CD4-positive, alpha-beta memory T cell (primary cell): ENCODE measurements at regions of chr14 and their contacts with region 1.

Region 1: GRCh38 chr14:24241829-24242443 is 487 bp downstream of the TINF2 start:
- DNase-seq: peak; percentile 96 to 98 (median 97)
- H3K4me3 ChIP-seq: peak overlapping the region; percentile 79 to 81
- H3K4me3 Mint-ChIP-seq: peak overlapping the region; percentile 87 to 99 (median 94)
- H3K27ac ChIP-seq: peak overlapping the region; percentile 96
- H3K27ac Mint-ChIP-seq: peak overlapping the region; percentile 99 to 100 (median 99)
- H3K4me1 ChIP-seq: peaks cover 55% of the 10 kb centered on the region
- H3K4me1 Mint-ChIP-seq: peaks cover 35 to 77% (median 57%) of the 10 kb centered on the region in 4 donors
- H3K27me3 ChIP-seq: no peaks in the 10 kb centered on the region
- H3K27me3 Mint-ChIP-seq: no peaks in the 10 kb centered on the region

Region 2: GRCh38 chr14:23306410-23307145 is 935.4 kb before region 1 on chr14 and contains the start of gene BCL2L2:
- CTCF ChIA-PET with region 1: no interaction called
- POLR2A ChIA-PET with region 1: no interaction called
- intact Hi-C with region 1: no loop called
- DNase-seq: no peak
- H3K4me3 ChIP-seq: no peak within 1 kb of the TSS
- H3K4me3 Mint-ChIP-seq: no peak within 1 kb of the TSS
- H3K27ac ChIP-seq: no peak within 1 kb of the TSS
- H3K27ac Mint-ChIP-seq: peak within 1 kb of the TSS in 1 of 7 donors; percentile 54
- H3K4me1 ChIP-seq: no peaks in the 10 kb centered on the region
- H3K4me1 Mint-ChIP-seq: peaks cover 4 to 10% (median 6%) of the 10 kb centered on the region in 4 donors
- H3K27me3 ChIP-seq: no peaks in the 10 kb centered on the region
- H3K27me3 Mint-ChIP-seq: peaks cover 17 to 33% of the 10 kb centered on the region in 2 donors
- total RNA-seq, gene BCL2L2: 2.0 to 3.6 TPM

Region 3: GRCh38 chr14:24108336-24108874 is 133.5 kb before region 1 on chr14:
- CTCF ChIA-PET with region 1: interaction called, 8 read pairs
- POLR2A ChIA-PET with region 1: interaction called, 32 read pairs
- intact Hi-C with region 1: no loop called
- DNase-seq: no peak
- H3K4me3 ChIP-seq: no peak overlapping the region
- H3K4me3 Mint-ChIP-seq: peak overlapping the region in 4 of 8 donors; percentile 30 to 64 (median 44)
- H3K27ac ChIP-seq: peak overlapping the region; percentile 45
- H3K27ac Mint-ChIP-seq: peak overlapping the region; percentile 82 to 96 (median 95)
- H3K4me1 ChIP-seq: peaks cover 18% of the 10 kb centered on the region
- H3K4me1 Mint-ChIP-seq: peaks cover 6 to 15% (median 12%) of the 10 kb centered on the region in 4 donors
- H3K27me3 ChIP-seq: no peaks in the 10 kb centered on the region
- H3K27me3 Mint-ChIP-seq: no peaks in the 10 kb centered on the region

Region 4: GRCh38 chr14:24160850-24161804 is 80.8 kb before region 1 on chr14 and contains the start of gene IRF9:
- CTCF ChIA-PET with region 1: interaction called, 16 read pairs
- POLR2A ChIA-PET with region 1: interaction called, 18 read pairs
- intact Hi-C with region 1: no loop called
- DNase-seq: peak; percentile 94 to 97 (median 95)
- H3K4me3 ChIP-seq: peak within 1 kb of the TSS; percentile 73 to 97
- H3K4me3 Mint-ChIP-seq: peak within 1 kb of the TSS; percentile 96 to 100 (median 99)
- H3K27ac ChIP-seq: peak within 1 kb of the TSS; percentile 90
- H3K27ac Mint-ChIP-seq: peak within 1 kb of the TSS; percentile 97 to 100 (median 99)
- H3K4me1 ChIP-seq: peaks cover 50% of the 10 kb centered on the region
- H3K4me1 Mint-ChIP-seq: peaks cover 29 to 60% (median 48%) of the 10 kb centered on the region in 4 donors
- H3K27me3 ChIP-seq: no peaks in the 10 kb centered on the region
- H3K27me3 Mint-ChIP-seq: no peaks in the 10 kb centered on the region
- total RNA-seq, gene IRF9: 154 to 157 TPM

Region 5: GRCh38 chr14:24259252-24259995 is 17.5 kb after region 1 on chr14:
- CTCF ChIA-PET with region 1: interaction called, 10 read pairs
- POLR2A ChIA-PET with region 1: interaction called, 5 read pairs
- intact Hi-C with region 1: no loop called
- DNase-seq: no peak
- H3K4me3 ChIP-seq: no peak overlapping the region
- H3K4me3 Mint-ChIP-seq: no peak overlapping the region
- H3K27ac ChIP-seq: no peak overlapping the region
- H3K27ac Mint-ChIP-seq: peak overlapping the region in 1 of 7 donors; percentile 52
- H3K4me1 ChIP-seq: no peaks in the 10 kb centered on the region
- H3K4me1 Mint-ChIP-seq: no peaks in the 10 kb centered on the region
- H3K27me3 ChIP-seq: no peaks in the 10 kb centered on the region
- H3K27me3 Mint-ChIP-seq: no peaks in the 10 kb centered on the region

Region 6: DNA sequence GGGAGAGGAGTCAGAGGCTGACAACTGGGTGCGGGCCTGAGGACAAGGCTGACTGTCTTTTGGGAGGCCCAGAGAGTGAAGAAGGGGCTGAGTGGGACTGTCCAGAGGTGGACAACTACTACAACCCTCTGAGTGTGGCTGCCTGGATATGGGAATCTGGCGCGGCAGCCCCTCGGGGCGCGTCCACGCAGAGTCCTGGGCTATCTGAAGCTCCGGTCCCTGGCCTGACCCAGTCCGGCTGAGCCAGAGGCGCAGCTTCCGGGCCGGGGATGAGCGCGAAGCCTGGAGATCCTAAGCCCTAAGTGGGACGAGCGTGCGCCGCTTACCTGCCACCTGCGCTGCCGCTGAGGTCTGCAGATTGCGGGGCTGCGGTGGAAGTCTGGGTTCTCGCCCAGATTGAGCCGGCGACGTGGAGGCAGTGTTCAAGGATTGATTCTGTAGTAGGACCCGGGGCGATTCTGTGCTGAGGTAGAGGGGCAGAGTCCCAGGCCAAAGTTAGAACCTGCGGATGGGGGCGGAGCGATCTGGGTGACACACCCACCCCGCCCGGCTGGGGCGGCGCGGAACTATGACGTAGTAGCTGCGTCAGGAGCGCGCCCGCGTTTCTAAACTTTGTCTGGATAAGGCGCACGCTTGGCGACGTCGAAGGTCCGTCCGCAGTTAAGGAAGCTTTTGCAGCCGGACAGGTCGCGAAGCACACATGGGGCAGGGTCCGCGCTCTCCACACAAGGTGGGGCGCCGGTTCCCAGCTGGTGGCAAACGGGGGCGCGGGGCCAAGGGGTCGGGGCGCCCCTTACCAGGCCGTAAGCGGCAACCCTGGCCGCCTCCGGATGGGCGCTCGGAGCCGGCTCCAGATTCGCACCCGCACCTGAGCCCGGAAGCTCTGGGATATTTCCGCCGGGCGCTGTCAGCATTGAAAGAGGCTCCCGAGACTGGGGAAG is 57.6 kb after region 1 on chr14 and contains the starts of genes DHRS1 and NOP9:
- CTCF ChIA-PET with region 1: interaction called, 556 read pairs
- POLR2A ChIA-PET with region 1: interaction called, 136 read pairs
- intact Hi-C with region 1: loop called (anchors 1 kb)
- DNase-seq: peak; percentile 89 to 92 (median 90)
- H3K4me3 ChIP-seq: peak within 1 kb of the TSS; percentile 77 to 85
- H3K4me3 Mint-ChIP-seq: peak within 1 kb of the TSS; percentile 91 to 99 (median 94)
- H3K27ac ChIP-seq: peak within 1 kb of the TSS; percentile 87
- H3K27ac Mint-ChIP-seq: peak within 1 kb of the TSS; percentile 96 to 99 (median 98)
- H3K4me1 ChIP-seq: peaks cover 42% of the 10 kb centered on the region
- H3K4me1 Mint-ChIP-seq: peaks cover 32 to 66% (median 51%) of the 10 kb centered on the region in 4 donors
- H3K27me3 ChIP-seq: no peaks in the 10 kb centered on the region
- H3K27me3 Mint-ChIP-seq: no peaks in the 10 kb centered on the region
- total RNA-seq, gene DHRS1: 37.6 to 38.6 TPM
- total RNA-seq, gene NOP9: 23.1 to 28.1 TPM

Region 7: GRCh38 chr14:24351517-24351916 is 109.6 kb after region 1 on chr14:
- CTCF ChIA-PET with region 1: no interaction called
- POLR2A ChIA-PET with region 1: no interaction called
- intact Hi-C with region 1: no loop called
- DNase-seq: no peak
- H3K4me3 ChIP-seq: no peak overlapping the region
- H3K4me3 Mint-ChIP-seq: no peak overlapping the region
- H3K27ac ChIP-seq: no peak overlapping the region
- H3K27ac Mint-ChIP-seq: no peak overlapping the region
- H3K4me1 ChIP-seq: no peaks in the 10 kb centered on the region
- H3K4me1 Mint-ChIP-seq: no peaks in the 10 kb centered on the region
- H3K27me3 ChIP-seq: peaks cover 3% of the 10 kb centered on the region
- H3K27me3 Mint-ChIP-seq: peaks cover 34 to 37% of the 10 kb centered on the region in 2 donors

Region 8: DNA sequence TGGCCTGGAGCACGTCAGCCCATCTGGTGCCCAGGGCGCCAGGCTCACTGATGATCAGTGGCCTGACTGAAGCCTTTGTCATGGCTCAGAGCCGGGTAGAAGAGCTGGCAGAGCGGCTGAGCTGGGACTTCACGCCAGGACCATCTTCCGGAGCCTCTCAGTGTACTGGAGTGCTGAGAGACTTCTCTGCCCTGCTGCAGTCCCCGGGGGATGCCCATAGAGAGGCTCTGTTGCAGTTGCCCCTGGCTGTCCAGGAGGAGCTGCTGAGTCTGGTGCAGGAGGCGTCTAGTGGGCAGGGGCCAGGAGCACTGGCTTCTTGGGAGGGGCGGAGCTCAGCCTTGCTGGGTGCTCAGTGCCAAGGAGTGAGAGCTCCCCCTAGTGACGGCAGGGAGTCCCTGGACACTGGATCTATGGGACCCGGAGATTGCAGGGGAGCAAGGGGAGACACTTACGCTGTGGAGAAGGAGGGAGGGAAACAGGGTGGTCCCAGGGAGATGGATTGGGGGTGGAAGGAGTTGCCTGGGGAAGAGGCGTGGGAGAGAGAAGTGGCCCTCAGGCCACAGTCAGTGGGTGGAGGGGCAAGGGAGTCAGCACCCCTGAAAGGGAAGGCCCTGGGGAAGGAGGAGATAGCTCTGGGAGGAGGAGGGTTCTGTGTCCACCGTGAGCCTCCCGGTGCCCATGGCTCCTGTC is 189.8 kb after region 1 on chr14:
- CTCF ChIA-PET with region 1: interaction called, 61 read pairs
- POLR2A ChIA-PET with region 1: interaction called, 121 read pairs
- intact Hi-C with region 1: loop called (anchors 1 kb)
- DNase-seq: peak; percentile 85 to 87 (median 85)
- H3K4me3 ChIP-seq: peak overlapping the region in 1 of 2 donors; percentile 87
- H3K4me3 Mint-ChIP-seq: peak overlapping the region; percentile 90 to 95 (median 92)
- H3K27ac ChIP-seq: peak overlapping the region; percentile 93
- H3K27ac Mint-ChIP-seq: peak overlapping the region; percentile 84 to 98 (median 96)
- H3K4me1 ChIP-seq: peaks cover 61% of the 10 kb centered on the region
- H3K4me1 Mint-ChIP-seq: peaks cover 27 to 66% (median 45%) of the 10 kb centered on the region in 4 donors
- H3K27me3 ChIP-seq: no peaks in the 10 kb centered on the region
- H3K27me3 Mint-ChIP-seq: no peaks in the 10 kb centered on the region